ENCODE measurements at regions of chr3 and their contacts with region 1.

Region 1: GRCh38 chr3:48898383-48899234 is at the start of gene SLC25A20:
- DNase-seq: peak; percentile 96
- ATAC-seq: peak; percentile 93
- H3K4me3 Mint-ChIP-seq: peak within 1 kb of the TSS; percentile 95
- H3K27ac Mint-ChIP-seq: peak within 1 kb of the TSS; percentile 93
- H3K4me1 Mint-ChIP-seq: peaks cover 35% of the 10 kb centered on the region
- H3K27me3 Mint-ChIP-seq: no peaks in the 10 kb centered on the region
- total RNA-seq, gene SLC25A20: 27.5 to 28.3 TPM

Region 2: GRCh38 chr3:48716982-48717746 is 181.4 kb before region 1 on chr3 and contains the start of gene IP6K2:
- POLR2A ChIA-PET with region 1: interaction called, 12 read pairs
- DNase-seq: peak; percentile 99
- ATAC-seq: peak; percentile 100
- H3K4me3 Mint-ChIP-seq: peak within 1 kb of the TSS; percentile 99
- H3K27ac Mint-ChIP-seq: peak within 1 kb of the TSS; percentile 98
- H3K4me1 Mint-ChIP-seq: peaks cover 23% of the 10 kb centered on the region
- H3K27me3 Mint-ChIP-seq: peaks cover 21% of the 10 kb centered on the region
- total RNA-seq, gene IP6K2: 68.4 to 72.0 TPM

Region 3: GRCh38 chr3:48847504-48848423 is 50.8 kb before region 1 on chr3 and contains the start of gene PRKAR2A:
- POLR2A ChIA-PET with region 1: interaction called, 20 read pairs
- DNase-seq: peak; percentile 86
- ATAC-seq: peak; percentile 82
- H3K4me3 Mint-ChIP-seq: peak within 1 kb of the TSS; percentile 74
- H3K27ac Mint-ChIP-seq: peak within 1 kb of the TSS; percentile 87
- H3K4me1 Mint-ChIP-seq: peaks cover 18% of the 10 kb centered on the region
- H3K27me3 Mint-ChIP-seq: no peaks in the 10 kb centered on the region
- total RNA-seq, gene PRKAR2A: 37.0 to 37.6 TPM

Region 4: DNA sequence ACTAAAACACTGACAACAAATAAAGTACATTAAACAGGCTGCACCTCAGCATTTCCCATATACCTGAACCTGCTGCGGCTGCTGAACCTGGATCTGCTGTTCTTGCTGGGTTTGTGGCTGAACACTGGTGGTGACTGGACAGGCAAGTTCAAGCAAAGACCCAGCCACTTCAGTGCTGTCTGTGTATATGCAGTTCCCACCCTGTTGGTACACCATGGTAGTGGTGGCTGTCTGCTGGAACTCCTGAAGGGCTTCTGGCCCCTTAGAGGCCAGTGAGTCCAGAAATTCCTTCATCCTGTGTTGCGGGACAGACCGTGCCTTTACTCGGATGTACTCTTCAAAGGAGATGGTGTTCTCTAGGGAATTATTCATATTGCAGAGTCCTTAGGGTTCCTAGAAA is 178.0 kb after region 1 on chr3:
- POLR2A ChIA-PET with region 1: no interaction called
- DNase-seq: no peak
- ATAC-seq: no peak
- H3K4me3 Mint-ChIP-seq: no peak overlapping the region
- H3K27ac Mint-ChIP-seq: no peak overlapping the region
- H3K4me1 Mint-ChIP-seq: peaks cover 1% of the 10 kb centered on the region
- H3K27me3 Mint-ChIP-seq: no peaks in the 10 kb centered on the region